HepG2 (cell line): ENCODE measurements at regions of chr22 and their contacts with region 1.

Region 1: GRCh38 chr22:38705235-38706100 is at the start of gene GTPBP1:
- DNase-seq: peak; percentile 100
- ATAC-seq: peak; percentile 88
- H3K4me3 ChIP-seq: peak within 1 kb of the TSS; percentile 82 to 87 (median 83)
- H3K27ac ChIP-seq: peak within 1 kb of the TSS; percentile 81
- H3K4me1 ChIP-seq: peaks cover 49% of the 10 kb centered on the region
- H3K27me3 ChIP-seq: no peaks in the 10 kb centered on the region; a peak in 1 of 5 replicates
- CTCF ChIP-seq: peak; percentile 24; the same call in 1 of the 2 replicates
- EP300 ChIP-seq: no peak
- POLR2A ChIP-seq: peak; percentile 76 to 87
- RAD21 ChIP-seq: no peak
- total RNA-seq, gene GTPBP1: 22.3 and 24.6 TPM in 2 replicates

Region 2: GRCh38 chr22:38554281-38554680 is 151.2 kb before region 1 on chr22:
- CTCF ChIA-PET with region 1: no interaction called
- POLR2A ChIA-PET with region 1: no interaction called
- in situ Hi-C with region 1: no loop called
- intact Hi-C with region 1: no loop called
- DNase-seq: no peak
- ATAC-seq: no peak
- H3K4me3 ChIP-seq: no peak overlapping the region
- H3K27ac ChIP-seq: no peak overlapping the region
- H3K4me1 ChIP-seq: peaks cover 5% of the 10 kb centered on the region; the same call in 1 of the 2 replicates
- H3K27me3 ChIP-seq: no peaks in the 10 kb centered on the region
- CTCF ChIP-seq: no peak
- EP300 ChIP-seq: no peak
- POLR2A ChIP-seq: no peak
- RAD21 ChIP-seq: no peak

Region 3: GRCh38 chr22:38681784-38682335 is 23.6 kb before region 1 on chr22 and contains the start of gene TOMM22:
- CTCF ChIA-PET with region 1: no interaction called
- POLR2A ChIA-PET with region 1: interaction called, 102 read pairs
- in situ Hi-C with region 1: no loop called
- intact Hi-C with region 1: no loop called
- DNase-seq: peak; percentile 75
- ATAC-seq: peak; percentile 99
- H3K4me3 ChIP-seq: peak within 1 kb of the TSS; percentile 98 to 99 (median 99)
- H3K27ac ChIP-seq: peak within 1 kb of the TSS; percentile 76
- H3K4me1 ChIP-seq: peaks cover 30% of the 10 kb centered on the region
- H3K27me3 ChIP-seq: no peaks in the 10 kb centered on the region
- CTCF ChIP-seq: peak; percentile 97
- EP300 ChIP-seq: no peak; a peak in 1 of 4 replicates
- POLR2A ChIP-seq: peak; percentile 86 to 93
- RAD21 ChIP-seq: peak; percentile 67
- total RNA-seq, gene TOMM22: 118 and 143 TPM in 2 replicates

Region 4: GRCh38 chr22:38850941-38851849 is 145.7 kb after region 1 on chr22:
- CTCF ChIA-PET with region 1: no interaction called
- POLR2A ChIA-PET with region 1: no interaction called
- in situ Hi-C with region 1: no loop called
- intact Hi-C with region 1: no loop called
- DNase-seq: no peak
- ATAC-seq: no peak
- H3K4me3 ChIP-seq: no peak overlapping the region
- H3K27ac ChIP-seq: no peak overlapping the region
- H3K4me1 ChIP-seq: peaks cover 21% of the 10 kb centered on the region
- H3K27me3 ChIP-seq: peaks cover 5 to 55% of the 10 kb centered on the region in 2 experiments; a peak in 4 of 5 replicates
- CTCF ChIP-seq: no peak
- EP300 ChIP-seq: no peak
- POLR2A ChIP-seq: no peak
- RAD21 ChIP-seq: no peak

Region 5: GRCh38 chr22:38862375-38863329 is 157.2 kb after region 1 on chr22:
- CTCF ChIA-PET with region 1: no interaction called
- POLR2A ChIA-PET with region 1: no interaction called
- in situ Hi-C with region 1: no loop called
- intact Hi-C with region 1: no loop called
- DNase-seq: no peak
- ATAC-seq: no peak
- H3K4me3 ChIP-seq: no peak overlapping the region
- H3K27ac ChIP-seq: no peak overlapping the region
- H3K4me1 ChIP-seq: peaks cover 54% of the 10 kb centered on the region
- H3K27me3 ChIP-seq: no peaks in the 10 kb centered on the region
- CTCF ChIP-seq: no peak
- EP300 ChIP-seq: no peak
- POLR2A ChIP-seq: no peak
- RAD21 ChIP-seq: no peak